GM12878 (cell line): ENCODE measurements at regions of chr6 and their contacts with region 1.

Region 1: GRCh38 chr6:35522660-35523658 is 10.3 kb upstream of the TULP1 start:
- DNase-seq: peak; percentile 28
- ATAC-seq: peak; percentile 94
- H3K4me3 ChIP-seq: peak overlapping the region; percentile 43; the same call in 1 of the 2 replicates
- H3K27ac ChIP-seq: no peak overlapping the region
- H3K4me1 ChIP-seq: no peaks in the 10 kb centered on the region
- H3K27me3 ChIP-seq: peaks cover 0 to 1% of the 10 kb centered on the region in 2 experiments; a peak in 2 of 4 replicates
- CTCF ChIP-seq: peak; percentile 93 to 99 (median 97)
- EP300 ChIP-seq: no peak; a peak in 1 of 4 replicates
- POLR2A ChIP-seq: no peak
- RAD21 ChIP-seq: peak; percentile 90

Region 2: DNA sequence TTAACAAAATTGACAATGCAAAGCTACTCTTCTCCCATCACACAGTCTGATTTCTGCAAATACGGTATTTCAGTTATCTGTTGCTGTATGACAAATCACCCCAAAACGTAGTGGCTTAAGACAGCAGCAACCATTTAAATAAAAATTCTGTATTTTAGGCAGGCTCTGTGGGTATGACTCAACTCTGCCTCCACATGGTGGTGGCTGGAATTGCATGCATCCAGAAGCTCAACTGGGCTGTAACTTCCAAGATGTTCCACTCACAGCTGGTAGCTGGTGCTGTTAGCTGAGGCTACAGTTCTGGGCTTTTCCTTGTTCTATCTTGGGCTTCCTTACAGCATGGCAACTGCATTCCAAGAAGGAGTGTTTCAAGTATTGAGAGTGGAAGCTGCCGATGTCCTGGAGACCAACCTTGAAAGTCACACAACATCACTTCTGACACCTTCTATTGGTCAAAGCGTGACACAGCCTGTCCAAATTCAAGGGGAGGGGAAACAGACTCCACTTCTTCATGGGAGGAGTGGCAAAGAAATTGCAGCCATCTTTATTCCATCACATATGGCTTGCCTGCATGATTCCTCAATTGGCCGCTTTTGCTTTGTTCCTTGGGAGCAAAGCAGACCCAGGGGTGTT is 29.4 kb after region 1 on chr6:
- CTCF ChIA-PET with region 1: interaction called, 19 read pairs
- POLR2A ChIA-PET with region 1: no interaction called
- RAD21 ChIA-PET with region 1: interaction called, 3 read pairs
- SMC1A ChIA-PET with region 1: interaction called, 3 read pairs
- in situ Hi-C with region 1: no loop called
- intact Hi-C with region 1: no loop called
- DNase-seq: peak; percentile 15
- ATAC-seq: peak; percentile 43; the same call in 2 of the 3 replicates
- H3K4me3 ChIP-seq: no peak overlapping the region
- H3K27ac ChIP-seq: no peak overlapping the region
- H3K4me1 ChIP-seq: no peaks in the 10 kb centered on the region
- H3K27me3 ChIP-seq: no peaks in the 10 kb centered on the region
- CTCF ChIP-seq: peak; percentile 40 to 90 (median 83)
- EP300 ChIP-seq: no peak
- POLR2A ChIP-seq: no peak
- RAD21 ChIP-seq: peak; percentile 39; the same call in 1 of the 2 replicates

Region 3: GRCh38 chr6:35558571-35558970 is 35.6 kb after region 1 on chr6:
- CTCF ChIA-PET with region 1: interaction called, 19 read pairs
- POLR2A ChIA-PET with region 1: no interaction called
- RAD21 ChIA-PET with region 1: interaction called, 5 read pairs
- SMC1A ChIA-PET with region 1: interaction called, 3 read pairs
- in situ Hi-C with region 1: no loop called
- intact Hi-C with region 1: no loop called
- DNase-seq: peak; percentile 17
- ATAC-seq: no peak
- H3K4me3 ChIP-seq: no peak overlapping the region
- H3K27ac ChIP-seq: no peak overlapping the region
- H3K4me1 ChIP-seq: no peaks in the 10 kb centered on the region
- H3K27me3 ChIP-seq: no peaks in the 10 kb centered on the region; a peak in 1 of 4 replicates
- CTCF ChIP-seq: no peak
- EP300 ChIP-seq: no peak
- POLR2A ChIP-seq: no peak
- RAD21 ChIP-seq: no peak

Region 4: DNA sequence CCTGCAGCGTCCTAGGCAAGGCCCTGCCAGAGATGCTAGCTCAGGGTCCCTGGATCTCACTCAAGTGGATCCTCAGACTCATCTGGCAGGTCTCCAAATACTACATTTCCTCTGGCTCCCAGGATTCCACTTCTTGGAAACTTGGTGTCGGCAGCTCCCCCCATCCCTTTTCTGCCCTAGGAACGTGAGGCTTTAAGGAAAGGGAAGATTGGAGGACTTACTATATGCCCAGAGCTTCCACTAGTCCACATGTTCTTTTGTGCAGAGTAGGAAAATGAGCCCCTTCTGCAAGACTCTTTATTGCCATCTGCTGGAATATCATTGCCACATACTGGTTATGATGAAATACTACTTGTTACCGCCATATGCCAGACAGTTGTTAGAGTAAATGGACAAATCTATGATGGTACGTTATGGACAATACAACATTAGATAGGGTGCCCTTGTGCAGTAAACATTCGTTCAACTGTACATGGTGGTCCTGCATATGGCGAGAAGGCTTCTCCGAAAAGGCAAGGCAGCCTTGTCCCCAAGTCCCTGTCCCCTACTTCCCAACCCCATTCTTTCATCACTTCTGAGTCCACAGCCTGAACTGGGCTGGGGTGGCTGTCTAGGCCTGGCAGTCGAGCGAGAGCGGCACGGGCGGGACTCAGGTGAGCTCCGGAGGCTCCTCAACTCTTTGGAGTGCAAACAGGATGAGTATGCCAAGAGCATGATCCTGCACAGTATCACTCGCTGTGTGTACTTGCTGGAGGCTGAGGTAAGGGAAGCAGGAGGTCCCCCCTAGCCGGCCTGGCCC is 214.7 kb after region 1 on chr6:
- CTCF ChIA-PET with region 1: interaction called, 168 read pairs
- POLR2A ChIA-PET with region 1: interaction called, 3 read pairs
- RAD21 ChIA-PET with region 1: interaction called, 49 read pairs
- SMC1A ChIA-PET with region 1: interaction called, 25 read pairs
- in situ Hi-C with region 1: loop called (anchors 5 kb)
- intact Hi-C with region 1: loop called (anchors 1 kb)
- DNase-seq: no peak
- ATAC-seq: peak; percentile 90
- H3K4me3 ChIP-seq: no peak overlapping the region
- H3K27ac ChIP-seq: no peak overlapping the region
- H3K4me1 ChIP-seq: peaks cover 4% of the 10 kb centered on the region
- H3K27me3 ChIP-seq: no peaks in the 10 kb centered on the region
- CTCF ChIP-seq: peak; percentile 68 to 87 (median 87); a peak in 5 of 6 replicates
- EP300 ChIP-seq: no peak
- POLR2A ChIP-seq: no peak
- RAD21 ChIP-seq: peak; percentile 89

Region 5: GRCh38 chr6:35955976-35956375 is 433.0 kb after region 1 on chr6:
- CTCF ChIA-PET with region 1: no interaction called
- POLR2A ChIA-PET with region 1: no interaction called
- RAD21 ChIA-PET with region 1: interaction called, 5 read pairs
- SMC1A ChIA-PET with region 1: no interaction called
- in situ Hi-C with region 1: no loop called
- intact Hi-C with region 1: loop called (anchors 10 kb)
- DNase-seq: no peak
- ATAC-seq: no peak
- H3K4me3 ChIP-seq: no peak overlapping the region
- H3K27ac ChIP-seq: no peak overlapping the region
- H3K4me1 ChIP-seq: no peaks in the 10 kb centered on the region
- H3K27me3 ChIP-seq: peaks cover 2 to 3% of the 10 kb centered on the region in 2 experiments; a peak in 2 of 4 replicates
- CTCF ChIP-seq: peak; percentile 12 to 28 (median 21); a peak in 3 of 6 replicates
- EP300 ChIP-seq: no peak
- POLR2A ChIP-seq: no peak
- RAD21 ChIP-seq: peak; percentile 41